GM23248 (cell line): ENCODE measurements at regions of chr1 and their contacts with region 1.

Region 1: DNA sequence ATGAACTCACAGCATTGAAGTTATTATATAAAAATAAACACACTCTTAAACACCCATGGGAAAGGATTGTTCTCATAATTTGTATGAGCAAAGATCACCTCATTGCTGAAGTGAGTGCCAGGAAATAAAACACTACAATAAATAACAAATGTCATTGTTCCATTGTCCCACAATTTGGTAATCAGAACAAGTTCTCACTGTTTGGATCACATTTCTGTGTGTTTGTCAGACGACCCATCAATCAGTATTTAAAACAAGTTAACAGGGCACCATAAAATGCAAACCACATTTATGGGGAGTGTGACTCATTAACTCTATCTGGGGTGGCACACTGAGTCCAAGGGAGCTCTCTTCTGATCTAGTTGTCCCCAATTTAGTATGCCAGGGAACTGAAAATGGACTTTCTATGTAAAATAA is 124.5 kb downstream of the PTPRC start:
- DNase-seq: peak; percentile 32
- H3K4me3 ChIP-seq: no peak overlapping the region
- H3K27ac ChIP-seq: no peak overlapping the region
- H3K4me1 ChIP-seq: 0 out of 2 replicates have a peak, but pooled peaks cover 7% of the 10 kb centered on the region
- H3K27me3 ChIP-seq: no peaks in the 10 kb centered on the region

Region 2: DNA sequence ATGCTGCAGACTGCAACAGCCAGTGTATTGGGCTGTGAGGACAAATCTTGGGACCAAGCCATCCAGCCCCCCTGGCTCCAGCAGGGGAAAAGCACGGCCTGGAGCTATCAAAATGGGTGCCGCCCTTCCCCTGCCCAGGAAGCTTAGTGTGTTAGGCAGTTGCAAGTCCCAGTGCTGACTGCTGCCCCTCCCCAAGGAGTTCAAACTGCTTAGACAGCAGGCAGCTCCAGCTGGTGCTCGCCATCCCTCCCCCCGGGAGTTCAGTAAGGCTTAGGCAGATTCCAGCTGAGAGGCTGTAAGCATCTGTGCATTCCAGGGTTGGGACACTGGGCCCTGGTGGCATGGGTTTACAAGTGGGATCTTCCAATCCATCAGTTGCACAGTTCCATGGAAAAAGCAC is 684.6 kb after region 1 on chr1:
- in situ Hi-C with region 1: loop called (anchors 10 kb)
- DNase-seq: no peak
- H3K4me3 ChIP-seq: no peak overlapping the region
- H3K27ac ChIP-seq: no peak overlapping the region
- H3K4me1 ChIP-seq: no peaks in the 10 kb centered on the region
- H3K27me3 ChIP-seq: no peaks in the 10 kb centered on the region; the same call in 1 of the 2 replicates